HepG2 (cell line): ENCODE measurements at regions of chr1 and their contacts with region 1.

Region 1: DNA sequence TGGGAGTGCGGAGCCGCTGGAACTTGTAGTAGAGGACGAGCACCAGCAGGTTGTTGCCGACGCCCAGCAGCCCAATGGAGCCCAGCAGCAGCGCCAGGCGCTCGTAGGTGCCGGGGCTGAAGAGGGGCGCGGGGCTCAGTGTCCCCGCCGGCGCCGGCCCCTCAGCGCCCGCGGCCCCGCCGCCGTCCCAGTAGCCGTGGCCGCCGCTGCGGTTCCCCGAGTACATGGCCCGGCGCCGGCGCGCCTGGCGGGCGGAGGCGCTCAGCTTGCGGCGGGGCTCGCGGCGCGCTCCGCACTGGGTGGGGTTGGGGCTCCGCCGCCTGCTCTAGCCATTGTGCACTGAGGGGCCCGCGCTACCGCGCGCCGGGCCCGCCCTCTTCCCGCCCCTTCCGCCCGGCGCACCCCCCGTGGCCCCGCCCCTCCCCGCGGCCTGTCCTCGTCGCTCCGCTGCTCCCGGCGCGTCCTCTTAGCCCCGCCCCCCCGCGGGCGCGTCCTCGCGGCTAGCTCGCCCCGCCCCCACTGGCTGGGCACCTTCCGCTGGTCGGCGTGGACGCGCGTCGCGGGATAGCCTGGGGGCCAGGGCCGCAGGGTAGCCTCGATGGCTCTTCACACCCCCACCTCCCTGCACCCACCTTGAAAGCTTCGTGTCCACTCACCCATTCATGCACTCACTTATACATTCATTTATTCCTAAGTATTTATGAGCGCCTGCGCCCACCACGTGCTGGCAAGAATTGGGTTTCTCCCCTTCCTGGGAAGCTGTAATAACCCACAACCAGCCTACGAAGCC is at the starts of genes CHML and OPN3:
- DNase-seq: peak; percentile 76
- ATAC-seq: peak; percentile 92
- H3K4me3 ChIP-seq: peak within 1 kb of the TSS; percentile 85 to 100 (median 99)
- H3K27ac ChIP-seq: peak within 1 kb of the TSS; percentile 91
- H3K4me1 ChIP-seq: peaks cover 47% of the 10 kb centered on the region
- H3K27me3 ChIP-seq: no peaks in the 10 kb centered on the region; a peak in 1 of 5 replicates
- CTCF ChIP-seq: no peak
- EP300 ChIP-seq: peak in 1 of 2 experiments; percentile 18; a peak in 1 of 4 replicates
- POLR2A ChIP-seq: peak; percentile 78 to 79
- RAD21 ChIP-seq: peak; percentile 52; the same call in 1 of the 2 replicates
- total RNA-seq, gene CHML: 16.7 and 21.0 TPM in 2 replicates
- total RNA-seq, gene OPN3: 17.2 and 17.4 TPM in 2 replicates

Region 2: GRCh38 chr1:241519308-241520079 is 120.7 kb before region 1 on chr1 and contains the start of gene FH:
- CTCF ChIA-PET with region 1: no interaction called
- POLR2A ChIA-PET with region 1: interaction called, 11 read pairs
- in situ Hi-C with region 1: loop called (anchors 10 kb)
- intact Hi-C with region 1: loop called (anchors 1 kb)
- DNase-seq: peak; percentile 97
- ATAC-seq: peak; percentile 97
- H3K4me3 ChIP-seq: peak within 1 kb of the TSS; percentile 65 to 88 (median 87)
- H3K27ac ChIP-seq: peak within 1 kb of the TSS; percentile 82
- H3K4me1 ChIP-seq: peaks cover 27% of the 10 kb centered on the region
- H3K27me3 ChIP-seq: no peaks in the 10 kb centered on the region
- CTCF ChIP-seq: 0 out of 2 replicates have a peak, but pooled peaks have one; percentile 3
- EP300 ChIP-seq: no peak
- POLR2A ChIP-seq: peak; percentile 84 to 95
- RAD21 ChIP-seq: peak; percentile 27; the same call in 1 of the 2 replicates
- total RNA-seq, gene FH: 152 and 211 TPM in 2 replicates

Region 3: DNA sequence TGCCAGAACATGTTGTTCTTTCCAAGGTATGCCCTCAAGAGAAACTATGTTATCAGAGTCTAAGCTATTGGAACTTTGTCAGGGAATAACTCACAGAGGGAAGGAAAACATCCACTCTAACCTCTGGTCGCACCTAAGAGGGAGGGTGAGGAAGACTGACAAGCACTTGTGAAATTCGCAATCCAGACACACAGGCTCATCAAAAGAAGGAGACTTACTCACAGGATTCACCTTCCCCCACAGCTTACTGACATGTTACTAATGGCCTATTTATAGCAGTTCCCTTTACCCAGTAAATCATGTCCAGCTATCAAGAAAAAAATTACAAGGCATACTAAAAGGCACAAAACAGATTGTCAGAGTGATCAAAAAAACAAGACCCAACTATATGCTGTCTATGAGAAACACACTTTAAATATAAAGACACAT is 48.7 kb after region 1 on chr1:
- CTCF ChIA-PET with region 1: no interaction called
- POLR2A ChIA-PET with region 1: no interaction called
- in situ Hi-C with region 1: no loop called
- intact Hi-C with region 1: no loop called
- DNase-seq: no peak
- ATAC-seq: no peak
- H3K4me3 ChIP-seq: no peak overlapping the region
- H3K27ac ChIP-seq: no peak overlapping the region
- H3K4me1 ChIP-seq: no peaks in the 10 kb centered on the region
- H3K27me3 ChIP-seq: no peaks in the 10 kb centered on the region; a peak in 1 of 5 replicates
- CTCF ChIP-seq: no peak
- EP300 ChIP-seq: no peak
- POLR2A ChIP-seq: no peak
- RAD21 ChIP-seq: no peak

Region 4: GRCh38 chr1:241770115-241770514 is 129.9 kb after region 1 on chr1:
- CTCF ChIA-PET with region 1: no interaction called
- POLR2A ChIA-PET with region 1: no interaction called
- in situ Hi-C with region 1: no loop called
- intact Hi-C with region 1: no loop called
- DNase-seq: no peak
- ATAC-seq: no peak
- H3K4me3 ChIP-seq: no peak overlapping the region
- H3K27ac ChIP-seq: no peak overlapping the region
- H3K4me1 ChIP-seq: no peaks in the 10 kb centered on the region
- H3K27me3 ChIP-seq: no peaks in the 10 kb centered on the region
- CTCF ChIP-seq: no peak
- EP300 ChIP-seq: no peak
- POLR2A ChIP-seq: no peak
- RAD21 ChIP-seq: no peak

Region 5: GRCh38 chr1:241847796-241848685 is 207.8 kb after region 1 on chr1 and contains the start of gene EXO1:
- CTCF ChIA-PET with region 1: no interaction called
- POLR2A ChIA-PET with region 1: interaction called, 10 read pairs
- in situ Hi-C with region 1: no loop called
- intact Hi-C with region 1: no loop called
- DNase-seq: peak; percentile 85
- ATAC-seq: peak; percentile 97
- H3K4me3 ChIP-seq: peak within 1 kb of the TSS; percentile 90 to 99 (median 97)
- H3K27ac ChIP-seq: peak within 1 kb of the TSS; percentile 86
- H3K4me1 ChIP-seq: peaks cover 29% of the 10 kb centered on the region
- H3K27me3 ChIP-seq: no peaks in the 10 kb centered on the region; a peak in 1 of 5 replicates
- CTCF ChIP-seq: peak; percentile 76
- EP300 ChIP-seq: no peak; a peak in 1 of 4 replicates
- POLR2A ChIP-seq: peak; percentile 63 to 70
- RAD21 ChIP-seq: peak; percentile 18; the same call in 1 of the 2 replicates
- total RNA-seq, gene EXO1: 26.1 and 35.6 TPM in 2 replicates